BJ (cell line): ENCODE measurements at regions of chr13 and their contacts with region 1.

Region 1: DNA sequence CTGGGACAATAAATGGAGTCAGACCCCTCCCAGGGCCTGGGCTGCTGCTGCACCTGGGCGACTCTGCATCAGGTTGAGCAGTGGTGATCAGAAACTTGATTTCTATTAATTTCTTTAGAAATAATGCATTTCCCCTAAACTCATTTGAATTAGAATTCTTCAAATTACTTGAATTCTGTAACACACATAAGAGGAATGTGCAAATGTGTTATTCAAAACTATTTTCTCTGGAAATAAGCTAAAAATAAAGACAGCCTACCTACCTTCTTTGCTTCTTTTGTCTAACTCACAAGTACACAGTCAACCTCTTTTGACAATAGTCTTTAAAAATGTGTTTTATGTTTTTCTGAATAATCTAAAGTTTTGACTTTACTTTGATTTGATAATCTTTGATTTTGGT is 433.0 kb downstream of the KLF12 start:
- DNase-seq: no peak
- H3K4me3 ChIP-seq: no peak overlapping the region
- H3K27me3 ChIP-seq: no peaks in the 10 kb centered on the region
- CTCF ChIP-seq: no peak

Region 2: GRCh38 chr13:73171926-73172325 is 529.2 kb before region 1 on chr13:
- CTCF ChIA-PET with region 1: no interaction called
- POLR2A ChIA-PET with region 1: interaction called, 15 read pairs
- DNase-seq: no peak
- H3K4me3 ChIP-seq: no peak overlapping the region
- H3K27me3 ChIP-seq: no peaks in the 10 kb centered on the region
- CTCF ChIP-seq: no peak